ENCODE measurements at regions of chr2 and their contacts with region 1.

Region 1: DNA sequence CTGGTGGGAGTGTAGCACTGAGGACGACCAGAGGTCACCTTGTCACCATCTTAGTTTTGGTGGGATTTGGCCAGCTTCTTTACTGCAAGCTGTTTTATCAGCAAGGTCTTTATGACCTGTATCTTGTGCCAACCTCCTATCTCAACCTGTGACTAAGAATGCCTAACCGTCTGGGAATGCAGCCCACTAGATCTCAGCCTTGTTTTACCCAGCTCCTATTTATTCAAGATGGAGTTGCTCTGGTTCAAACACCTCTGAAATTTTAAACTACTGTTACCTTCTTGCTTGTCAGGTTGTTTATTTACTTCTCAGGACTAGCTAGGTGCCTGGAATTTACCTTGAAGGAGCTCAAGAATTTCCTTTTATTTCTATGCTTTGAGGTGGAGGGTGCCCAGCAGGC is 9.5 kb upstream of the KCNG3 start:
- DNase-seq: no peak

Region 2: DNA sequence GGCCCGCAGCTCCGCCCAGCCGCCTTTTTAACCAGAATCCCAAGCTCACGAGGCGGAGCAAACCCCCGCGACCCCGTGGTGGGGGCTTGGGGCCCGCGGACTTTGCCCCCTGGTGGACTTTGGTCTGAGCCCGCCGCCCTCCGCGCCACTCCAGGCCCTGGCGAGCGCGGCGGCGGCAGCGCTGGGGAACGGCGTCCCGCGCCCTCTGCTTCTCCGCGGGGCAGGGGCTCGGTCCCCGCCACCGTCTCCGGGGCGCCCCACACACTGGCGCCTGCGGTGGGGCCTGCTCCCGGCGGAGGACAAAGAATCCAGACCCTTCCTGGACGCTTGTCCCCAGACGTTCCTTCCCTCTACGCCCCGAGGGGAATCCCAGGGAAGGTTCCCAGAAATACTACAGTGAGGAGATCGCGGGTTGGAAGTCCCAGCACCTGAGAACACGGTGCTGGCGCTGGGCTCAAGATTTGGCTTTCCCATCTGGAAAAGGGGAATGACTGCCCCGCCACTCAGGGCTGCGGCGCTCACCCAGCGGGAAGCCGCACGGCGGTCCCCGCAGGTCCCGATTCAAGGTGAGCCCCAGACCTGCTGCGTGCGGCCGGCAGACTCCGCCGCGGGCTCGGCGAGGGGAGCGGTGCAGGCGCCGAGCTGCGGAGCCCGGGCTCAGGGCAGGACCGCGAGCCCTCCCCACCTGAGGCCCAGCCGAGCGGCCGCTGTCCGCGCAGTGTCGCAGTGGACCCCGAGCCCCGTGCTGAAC is 289.5 kb after region 1 on chr2 and contains the start of gene HAAO:
- intact Hi-C with region 1: loop called (anchors 10 kb)
- DNase-seq: peak in 2 of 10 donors; percentile 56 to 74

Measured in posterior cingulate gyrus (tissue), 11 donors.